Activated CD4-positive, alpha-beta T cell treated with anti-CD3 and anti-CD28 coated beads for 36 hours (primary cell): ENCODE measurements at regions of chr2 and their contacts with region 1.

Region 1: GRCh38 chr2:70603066-70603465 is 49.4 kb upstream of the TGFA start:
- DNase-seq: no peak
- ATAC-seq: no peak
- H3K4me3 Mint-ChIP-seq: no peak overlapping the region
- H3K27ac Mint-ChIP-seq: no peak overlapping the region
- H3K4me1 Mint-ChIP-seq: peaks cover 9% of the 10 kb centered on the region
- H3K27me3 Mint-ChIP-seq: peaks cover 2% of the 10 kb centered on the region

Region 2: DNA sequence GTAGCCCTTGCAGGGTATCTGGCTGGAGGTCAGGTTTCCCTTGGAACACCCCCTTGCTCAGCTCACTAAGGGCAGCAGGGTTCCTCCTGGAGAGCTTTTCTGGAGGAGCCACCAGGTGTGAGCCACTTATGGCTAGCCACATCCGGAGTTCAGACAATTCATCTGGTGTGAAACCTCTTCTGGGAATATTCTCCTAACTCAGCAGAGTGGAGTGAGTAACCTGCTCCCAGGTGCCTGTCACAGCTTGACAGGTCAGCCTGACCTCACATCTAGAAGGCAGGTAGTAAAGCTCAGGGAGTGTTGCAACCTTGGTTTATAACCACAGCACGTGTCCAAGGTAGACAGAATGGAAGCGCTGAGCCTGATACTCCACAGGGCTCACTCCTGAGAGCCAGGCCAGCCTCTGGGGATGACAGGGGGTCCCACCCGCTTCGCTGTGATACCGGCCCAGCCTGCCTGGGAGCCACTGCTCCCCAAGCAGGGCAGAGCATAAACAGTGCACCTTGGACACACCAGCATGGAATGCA is 13.2 kb after region 1 on chr2:
- CTCF ChIA-PET with region 1: interaction called, 15 read pairs
- POLR2A ChIA-PET with region 1: interaction called, 3 read pairs
- intact Hi-C with region 1: no loop called
- DNase-seq: no peak
- ATAC-seq: no peak
- H3K4me3 Mint-ChIP-seq: no peak overlapping the region
- H3K27ac Mint-ChIP-seq: no peak overlapping the region
- H3K4me1 Mint-ChIP-seq: no peaks in the 10 kb centered on the region
- H3K27me3 Mint-ChIP-seq: peaks cover 2% of the 10 kb centered on the region